Heart right ventricle (tissue), 16 donors: ENCODE measurements at regions of chr11 and their contacts with region 1.

Region 1: DNA sequence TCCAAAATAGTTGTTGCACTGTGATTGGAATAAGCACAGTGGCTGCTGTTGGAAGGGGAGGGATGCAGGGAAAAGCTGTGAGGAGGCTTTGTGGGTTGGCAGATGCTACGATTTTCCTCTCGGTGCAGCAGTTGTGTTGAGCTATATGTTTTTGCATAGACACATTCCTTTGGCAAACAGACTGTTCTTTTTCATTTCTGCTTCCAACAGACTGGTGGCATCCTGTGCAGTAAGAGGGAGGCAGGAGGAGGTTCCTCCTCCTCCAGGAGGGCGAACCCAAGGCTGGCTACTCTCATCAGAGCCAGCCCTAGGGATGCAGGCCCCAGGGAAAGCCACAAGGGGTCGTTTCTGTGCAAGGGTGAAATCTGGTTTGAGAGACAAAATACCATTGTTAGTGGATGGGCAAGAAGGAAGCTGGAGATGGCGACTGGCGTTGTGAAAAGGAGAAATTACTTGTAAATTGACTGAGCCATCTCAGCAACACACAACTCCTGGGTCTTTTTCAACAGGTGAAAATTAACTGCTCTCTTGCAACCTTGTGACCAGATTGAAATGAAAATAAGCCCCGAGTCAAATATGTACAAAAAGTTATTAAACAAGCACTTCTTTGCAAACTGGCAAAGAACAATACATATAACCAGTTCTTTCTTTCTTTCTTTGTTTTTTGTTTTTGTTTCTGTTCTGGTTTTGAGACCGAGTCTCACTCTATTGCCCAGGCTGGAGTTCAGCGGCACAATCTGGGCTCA is 26.5 kb upstream of the UBASH3B start:
- DNase-seq: peak; percentile 48 to 57
- ATAC-seq: peak in 7 of 8 donors; percentile 58 to 79 (median 67)
- H3K4me3 ChIP-seq: no peak overlapping the region
- H3K27ac ChIP-seq: no peak overlapping the region
- H3K4me1 ChIP-seq: peaks cover 0 to 7% (median 0%) of the 10 kb centered on the region in 9 donors
- H3K27me3 ChIP-seq: peaks cover 0 to 40% (median 20%) of the 10 kb centered on the region in 7 donors
- CTCF ChIP-seq: peak; percentile 44 to 79 (median 74)

Region 2: DNA sequence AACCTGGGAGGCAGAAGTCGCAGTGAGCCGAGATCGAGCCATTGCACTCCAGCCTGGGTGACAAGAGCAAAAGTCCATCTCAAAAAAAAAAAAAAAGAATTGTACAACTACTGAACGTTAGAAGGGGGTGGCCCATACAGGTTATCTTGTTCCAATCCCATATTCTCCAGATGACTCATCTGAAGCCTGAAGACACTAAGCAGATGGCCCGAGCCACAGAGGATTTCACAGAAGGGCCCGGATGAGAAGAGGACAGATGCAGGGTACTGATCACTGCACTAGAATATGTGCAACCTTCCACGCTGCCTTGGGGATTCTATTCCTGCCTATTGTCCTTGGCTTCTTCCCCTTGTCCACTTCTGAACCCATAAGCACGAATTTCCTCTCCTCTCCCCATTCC is 44.3 kb before region 1 on chr11:
- intact Hi-C with region 1: loop called in 1 of 10 experiments (anchors 2 kb)
- DNase-seq: no peak
- ATAC-seq: no peak
- H3K4me3 ChIP-seq: no peak overlapping the region
- H3K27ac ChIP-seq: no peak overlapping the region
- H3K4me1 ChIP-seq: peaks cover 0 to 11% (median 0%) of the 10 kb centered on the region in 9 donors
- H3K27me3 ChIP-seq: peaks cover 0 to 9% (median 0%) of the 10 kb centered on the region in 7 donors
- CTCF ChIP-seq: no peak